Naive thymus-derived CD8-positive, alpha-beta T cell (primary cell): ENCODE measurements at regions of chr12 and their contacts with region 1.

Region 1: GRCh38 chr12:122752464-122753318 is at the start of gene DENR:
- DNase-seq: peak; percentile 98 to 100 (median 99)
- ATAC-seq: peak; percentile 92 to 94
- H3K4me3 Mint-ChIP-seq: peak within 1 kb of the TSS; percentile 87 to 98 (median 96)
- H3K27ac Mint-ChIP-seq: peak within 1 kb of the TSS; percentile 91 to 99 (median 96)
- H3K4me1 Mint-ChIP-seq: peaks cover 22 to 56% (median 51%) of the 10 kb centered on the region in 4 donors
- H3K27me3 Mint-ChIP-seq: no peaks in the 10 kb centered on the region
- polyA plus RNA-seq, gene DENR: 68.0 to 79.9 (median 78.3) TPM

Region 2: DNA sequence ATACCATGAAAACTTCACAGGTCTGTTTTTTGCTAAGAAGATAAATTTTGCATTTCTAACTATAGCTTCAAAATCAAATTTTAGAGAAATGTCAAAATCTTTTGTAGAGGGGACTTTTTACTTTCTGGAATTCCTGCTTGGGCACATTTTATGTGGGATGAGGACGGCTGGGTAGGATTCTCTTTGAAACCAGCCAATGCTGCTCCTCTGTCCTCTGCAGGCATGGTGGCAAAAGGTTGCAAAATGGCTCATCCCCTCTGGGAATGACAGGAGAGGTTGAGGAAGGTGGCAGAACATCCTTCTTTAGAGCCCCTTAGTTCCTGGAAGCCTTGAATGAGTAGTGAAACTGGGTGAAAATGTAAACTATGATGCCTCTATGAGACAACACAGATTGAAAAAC is 15.0 kb after region 1 on chr12:
- POLR2A ChIA-PET with region 1: interaction called, 14 read pairs
- DNase-seq: no peak
- ATAC-seq: no peak
- H3K4me3 Mint-ChIP-seq: no peak overlapping the region
- H3K27ac Mint-ChIP-seq: peak overlapping the region in 2 of 10 donors; percentile 25 to 56
- H3K4me1 Mint-ChIP-seq: peaks cover 0 to 7% (median 5%) of the 10 kb centered on the region in 4 donors
- H3K27me3 Mint-ChIP-seq: no peaks in the 10 kb centered on the region